ENCODE measurements at regions of chr13 and their contacts with region 1.

Region 1: DNA sequence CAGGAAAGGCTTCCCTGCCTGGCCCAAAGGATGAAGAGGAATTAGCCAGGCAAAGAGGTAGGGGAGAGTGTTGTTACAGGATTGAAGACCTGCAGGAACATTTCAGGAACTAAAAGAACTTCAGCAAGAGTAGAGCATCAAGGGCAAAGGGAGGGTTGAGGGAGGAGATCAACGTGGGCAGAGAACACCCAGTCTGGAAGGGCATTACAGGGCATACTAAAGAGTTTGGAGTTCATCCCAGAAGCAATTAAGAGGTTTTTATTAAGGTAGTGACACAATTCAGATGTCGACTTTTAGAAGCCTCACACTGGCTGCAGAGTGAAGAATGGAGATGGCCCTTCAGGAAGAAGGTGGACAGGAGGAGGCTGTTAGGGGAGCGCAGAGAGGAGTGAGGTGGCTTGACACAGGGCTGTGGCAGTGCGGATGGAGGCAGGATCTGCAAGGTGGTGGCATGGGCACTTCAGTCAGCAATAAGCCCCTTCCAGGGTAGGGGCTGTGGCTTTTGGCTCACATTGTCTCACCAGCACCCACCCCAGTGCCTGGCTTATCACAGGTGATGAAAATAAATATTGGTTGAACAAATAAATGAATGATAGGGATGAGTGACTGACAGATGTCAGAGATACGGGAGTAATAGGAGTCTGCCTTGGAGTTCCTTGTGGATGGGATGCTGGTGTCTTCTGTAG is 24.9 kb downstream of the TEX26 start:
- DNase-seq: no peak
- ATAC-seq: no peak
- H3K4me3 ChIP-seq: no peak overlapping the region
- H3K27ac ChIP-seq: no peak overlapping the region
- H3K4me1 ChIP-seq: no peaks in the 10 kb centered on the region
- H3K27me3 ChIP-seq: peaks cover 23% of the 10 kb centered on the region
- CTCF ChIP-seq: no peak
- POLR2A ChIP-seq: no peak
- RAD21 ChIP-seq: no peak

Region 2: DNA sequence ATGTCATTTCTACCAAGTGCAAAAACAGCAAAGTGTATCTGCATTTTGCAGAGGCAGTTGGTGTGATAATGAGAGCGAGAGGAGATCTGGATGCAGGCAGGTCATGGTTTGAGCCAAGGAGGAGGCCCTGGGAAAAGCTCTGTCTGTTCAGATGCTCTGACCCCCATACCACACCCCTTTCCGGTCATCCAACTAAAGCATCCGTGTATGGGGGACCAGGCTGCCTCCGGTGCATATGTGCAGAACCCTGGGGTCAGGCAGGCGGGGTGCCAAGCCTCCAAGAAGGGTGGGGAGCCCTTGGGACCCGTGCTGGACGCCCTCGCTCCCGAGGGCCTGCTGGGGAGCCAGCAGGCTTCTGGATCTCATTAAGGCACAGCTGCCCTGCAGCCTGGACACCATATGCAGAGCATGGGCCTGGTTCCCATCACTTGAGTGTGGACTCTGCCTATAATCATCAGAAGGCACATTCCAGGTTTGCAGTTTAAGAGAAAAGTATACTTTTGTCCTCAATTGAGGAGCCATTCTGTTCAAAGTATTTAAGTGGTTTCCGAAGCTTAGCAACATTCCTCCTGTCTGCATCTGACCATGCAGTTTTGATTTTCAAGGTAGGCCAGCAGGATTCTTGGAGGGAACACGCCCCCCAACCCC is 165.9 kb before region 1 on chr13:
- CTCF ChIA-PET with region 1: no interaction called
- POLR2A ChIA-PET with region 1: no interaction called
- dilution Hi-C with region 1: no loop called
- in situ Hi-C with region 1: no loop called
- intact Hi-C with region 1: no loop called
- DNase-seq: peak; percentile 43
- ATAC-seq: no peak
- H3K4me3 ChIP-seq: no peak overlapping the region
- H3K27ac ChIP-seq: peak overlapping the region; percentile 79; the same call in 1 of the 2 replicates
- H3K4me1 ChIP-seq: peaks cover 23% of the 10 kb centered on the region
- H3K27me3 ChIP-seq: no peaks in the 10 kb centered on the region
- CTCF ChIP-seq: no peak
- POLR2A ChIP-seq: no peak
- RAD21 ChIP-seq: no peak

Region 3: GRCh38 chr13:30880856-30881155 is 76.6 kb before region 1 on chr13:
- CTCF ChIA-PET with region 1: no interaction called
- POLR2A ChIA-PET with region 1: no interaction called
- dilution Hi-C with region 1: no loop called
- in situ Hi-C with region 1: no loop called
- intact Hi-C with region 1: no loop called
- DNase-seq: peak; percentile 97
- ATAC-seq: peak; percentile 89
- H3K4me3 ChIP-seq: no peak overlapping the region
- H3K27ac ChIP-seq: peak overlapping the region; percentile 88
- H3K4me1 ChIP-seq: peaks cover 27% of the 10 kb centered on the region
- H3K27me3 ChIP-seq: no peaks in the 10 kb centered on the region
- CTCF ChIP-seq: 0 out of 2 replicates have a peak, but pooled peaks have one; percentile 23
- POLR2A ChIP-seq: no peak; the same call in 1 of the 2 replicates
- RAD21 ChIP-seq: peak; percentile 48

Region 4: DNA sequence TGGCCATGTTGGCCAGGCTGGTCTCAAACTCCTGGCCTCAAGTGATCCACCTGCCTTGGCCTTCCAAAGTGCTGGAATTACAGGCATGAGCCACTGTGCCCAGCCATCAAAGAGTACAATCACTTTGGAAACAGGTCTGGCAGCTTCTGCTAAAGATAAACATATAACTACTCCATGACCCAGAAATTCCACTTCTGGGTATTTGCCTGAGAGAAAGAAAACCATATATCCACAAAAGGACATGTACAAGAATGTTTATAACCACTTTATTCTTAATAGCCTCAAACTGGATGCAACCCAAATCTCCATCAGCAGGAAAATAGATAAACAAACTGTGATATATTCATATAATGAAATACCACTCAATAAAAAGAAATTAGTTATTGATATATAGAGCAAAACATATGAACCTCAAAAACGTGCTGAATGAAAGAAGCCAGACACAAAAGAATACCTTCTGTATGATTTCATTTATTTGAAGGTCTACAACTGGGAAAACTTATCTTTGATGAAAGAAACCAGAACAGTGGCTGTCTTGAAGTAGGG is 15.5 kb after region 1 on chr13:
- CTCF ChIA-PET with region 1: no interaction called
- POLR2A ChIA-PET with region 1: interaction called, 10 read pairs
- dilution Hi-C with region 1: no loop called
- in situ Hi-C with region 1: no loop called
- intact Hi-C with region 1: no loop called
- DNase-seq: peak; percentile 45
- ATAC-seq: no peak
- H3K4me3 ChIP-seq: no peak overlapping the region
- H3K27ac ChIP-seq: peak overlapping the region; percentile 34; the same call in 1 of the 2 replicates
- H3K4me1 ChIP-seq: peaks cover 25% of the 10 kb centered on the region
- H3K27me3 ChIP-seq: no peaks in the 10 kb centered on the region
- CTCF ChIP-seq: no peak
- POLR2A ChIP-seq: no peak
- RAD21 ChIP-seq: no peak

Measured in IMR-90 (cell line).